PC-9 (cell line): ENCODE measurements at regions of chr16 and their contacts with region 1.

Region 1: GRCh38 chr16:1913327-1914083 is 4.7 kb downstream of the HS3ST6 start:
- DNase-seq: peak; percentile 72 to 80
- H3K4me3 ChIP-seq: no peak overlapping the region
- H3K27ac ChIP-seq: no peak overlapping the region
- H3K4me1 ChIP-seq: peaks cover 34% of the 10 kb centered on the region
- H3K27me3 ChIP-seq: 0 out of 2 replicates have a peak, but pooled peaks cover 5% of the 10 kb centered on the region
- CTCF ChIP-seq: no peak

Region 2: GRCh38 chr16:1871974-1872635 is 41.4 kb before region 1 on chr16 and contains the start of gene MEIOB:
- CTCF ChIA-PET with region 1: no interaction called
- POLR2A ChIA-PET with region 1: no interaction called
- intact Hi-C with region 1: loop called (anchors 5 kb)
- DNase-seq: peak in 1 of 2 experiments; percentile 49
- H3K4me3 ChIP-seq: peak within 1 kb of the TSS; percentile 26; the same call in 1 of the 2 replicates
- H3K27ac ChIP-seq: peak within 1 kb of the TSS; percentile 88
- H3K4me1 ChIP-seq: peaks cover 19% of the 10 kb centered on the region
- H3K27me3 ChIP-seq: no peaks in the 10 kb centered on the region
- CTCF ChIP-seq: no peak
- total RNA-seq, gene MEIOB: not detected in 2 replicates

Region 3: DNA sequence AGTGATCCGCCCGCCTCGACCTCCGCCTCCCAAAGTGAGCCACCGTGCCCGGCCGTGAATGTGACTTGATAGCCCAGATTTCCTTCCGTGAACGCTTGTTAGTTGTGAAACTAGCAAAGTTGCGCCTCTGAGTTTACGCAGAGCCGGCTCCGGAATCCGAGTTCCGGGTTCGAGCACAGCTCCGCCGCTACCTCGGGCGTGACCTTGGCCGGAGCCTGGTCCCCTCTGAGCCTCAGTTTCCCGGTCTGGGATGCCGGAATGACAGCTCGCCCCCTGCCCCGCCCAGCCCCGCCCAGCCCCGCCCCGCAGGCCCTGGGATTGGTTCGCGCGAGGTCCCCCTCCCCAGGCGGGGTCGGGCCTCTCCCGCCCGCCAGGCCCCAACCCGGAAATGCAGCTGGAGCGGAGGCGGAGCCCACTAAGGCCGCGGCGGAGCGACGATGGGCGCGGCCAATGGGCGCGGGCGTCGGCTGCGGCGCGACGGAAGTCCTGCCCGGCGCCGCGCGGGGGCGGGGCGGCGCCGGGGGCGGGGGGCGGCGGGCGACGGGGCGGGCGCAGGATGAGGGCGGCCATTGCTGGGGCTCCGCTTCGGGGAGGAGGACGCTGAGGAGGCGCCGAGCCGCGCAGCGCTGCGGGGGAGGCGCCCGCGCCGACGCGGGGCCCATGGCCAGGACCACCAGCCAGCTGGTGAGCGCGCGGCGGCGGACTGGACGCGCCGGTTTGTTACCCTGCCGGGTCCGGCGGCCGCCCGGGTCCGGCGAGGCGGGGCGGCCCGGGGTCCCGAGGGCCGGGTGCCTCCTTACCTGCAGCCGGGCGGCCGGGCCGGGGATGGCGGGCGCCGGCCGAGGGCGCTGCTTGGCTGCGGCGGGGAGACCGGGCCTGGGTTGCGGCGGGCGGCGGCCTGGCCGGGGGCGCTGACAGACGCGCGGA is 624.2 kb after region 1 on chr16 and contains the start of gene PDPK1:
- CTCF ChIA-PET with region 1: no interaction called
- POLR2A ChIA-PET with region 1: no interaction called
- intact Hi-C with region 1: no loop called
- DNase-seq: peak; percentile 83 to 98
- H3K4me3 ChIP-seq: peak within 1 kb of the TSS; percentile 60
- H3K27ac ChIP-seq: peak within 1 kb of the TSS; percentile 68
- H3K4me1 ChIP-seq: peaks cover 16% of the 10 kb centered on the region; the same call in 1 of the 2 replicates
- H3K27me3 ChIP-seq: no peaks in the 10 kb centered on the region
- CTCF ChIP-seq: no peak
- total RNA-seq, gene PDPK1: 43.2 and 46.8 TPM in 2 replicates